Calu3 (cell line): ENCODE measurements at regions of chr5 and their contacts with region 1.

Region 1: GRCh38 chr5:142874537-142874936 is 104.4 kb downstream of the ARHGAP26 start:
- DNase-seq: peak; percentile 92
- H3K4me3 Mint-ChIP-seq: peak overlapping the region; percentile 15
- H3K27ac Mint-ChIP-seq: peak overlapping the region; percentile 98
- H3K4me1 Mint-ChIP-seq: peaks cover 94% of the 10 kb centered on the region
- H3K27me3 Mint-ChIP-seq: no peaks in the 10 kb centered on the region
- CTCF ChIP-seq: no peak

Region 2: DNA sequence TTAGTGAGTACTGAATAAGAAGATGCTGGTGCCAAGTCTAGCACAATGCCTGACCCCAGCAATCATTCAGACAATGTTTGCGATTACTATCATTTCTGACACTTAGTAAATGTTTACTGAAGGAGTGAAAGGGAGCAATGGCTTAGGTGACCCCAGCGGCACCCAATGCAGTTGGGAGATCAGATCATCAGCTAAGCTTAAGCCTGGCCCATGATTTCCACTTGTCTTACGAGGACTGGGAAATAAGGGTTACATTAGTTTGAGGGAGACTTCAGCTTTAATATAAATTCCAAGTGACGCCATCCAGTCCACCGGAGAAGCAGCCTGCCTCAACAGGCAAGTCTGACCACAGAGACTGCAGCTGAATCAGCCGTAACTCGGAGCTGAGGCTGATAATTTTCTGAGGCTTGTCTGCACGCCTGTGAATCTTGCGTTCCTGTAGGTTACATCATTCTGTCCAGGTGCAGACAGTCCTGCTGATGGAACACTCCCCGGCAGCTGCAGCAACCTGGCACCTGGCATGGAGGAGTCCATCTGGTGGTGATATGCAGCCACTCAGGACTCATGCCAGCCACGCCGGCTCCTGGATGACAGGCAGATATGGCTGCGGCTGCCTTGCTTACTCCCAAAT is 153.8 kb before region 1 on chr5:
- CTCF ChIA-PET with region 1: interaction called, 31 read pairs
- intact Hi-C with region 1: no loop called
- DNase-seq: peak; percentile 34
- H3K4me3 Mint-ChIP-seq: no peak overlapping the region
- H3K27ac Mint-ChIP-seq: no peak overlapping the region
- H3K4me1 Mint-ChIP-seq: peaks cover 39% of the 10 kb centered on the region
- H3K27me3 Mint-ChIP-seq: no peaks in the 10 kb centered on the region
- CTCF ChIP-seq: no peak

Region 3: DNA sequence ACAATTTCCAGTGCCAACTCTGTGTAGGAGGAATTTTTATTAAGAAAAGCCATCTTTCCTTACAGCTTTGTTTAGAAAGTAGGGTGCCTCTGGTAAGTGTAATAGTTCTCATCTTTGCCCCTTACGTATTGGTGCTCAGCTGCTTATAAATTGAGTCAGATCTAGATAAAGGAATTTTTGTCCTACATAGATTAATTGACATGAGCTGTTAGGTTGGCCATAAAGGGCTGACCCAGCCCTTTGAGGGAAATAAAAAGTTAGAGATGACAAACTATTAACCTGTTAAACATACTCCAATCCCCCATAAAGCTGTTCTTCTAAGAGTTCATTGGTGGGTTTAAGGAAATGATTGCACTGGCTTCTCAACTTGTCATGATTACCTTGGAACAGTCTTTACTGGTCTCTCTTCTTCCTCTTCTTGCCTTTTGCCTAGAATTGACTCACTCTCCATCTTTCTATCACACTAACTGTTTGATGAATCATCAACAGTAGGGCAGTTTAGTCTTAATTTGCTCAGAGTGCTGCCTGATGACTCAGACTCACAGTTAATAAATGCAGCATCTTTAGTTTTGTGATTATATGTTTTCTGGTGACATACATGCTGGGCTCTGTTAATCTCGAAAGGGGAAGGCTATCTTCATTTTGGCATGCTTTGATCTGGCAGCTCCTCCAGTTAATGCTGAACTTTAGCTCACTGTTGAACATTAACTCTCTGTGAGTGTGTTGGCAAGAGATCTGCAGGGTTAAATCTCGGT is 52.6 kb before region 1 on chr5:
- CTCF ChIA-PET with region 1: interaction called, 14 read pairs
- intact Hi-C with region 1: loop called (anchors 2 kb)
- DNase-seq: peak; percentile 34
- H3K4me3 Mint-ChIP-seq: no peak overlapping the region
- H3K27ac Mint-ChIP-seq: peak overlapping the region; percentile 41
- H3K4me1 Mint-ChIP-seq: peaks cover 88% of the 10 kb centered on the region
- H3K27me3 Mint-ChIP-seq: no peaks in the 10 kb centered on the region
- CTCF ChIP-seq: no peak

Region 4: GRCh38 chr5:142845402-142845921 is 29.1 kb before region 1 on chr5:
- CTCF ChIA-PET with region 1: interaction called, 11 read pairs
- intact Hi-C with region 1: no loop called
- DNase-seq: no peak
- H3K4me3 Mint-ChIP-seq: peak overlapping the region; percentile 44
- H3K27ac Mint-ChIP-seq: peak overlapping the region; percentile 79
- H3K4me1 Mint-ChIP-seq: peaks cover 78% of the 10 kb centered on the region
- H3K27me3 Mint-ChIP-seq: no peaks in the 10 kb centered on the region
- CTCF ChIP-seq: no peak

Region 5: DNA sequence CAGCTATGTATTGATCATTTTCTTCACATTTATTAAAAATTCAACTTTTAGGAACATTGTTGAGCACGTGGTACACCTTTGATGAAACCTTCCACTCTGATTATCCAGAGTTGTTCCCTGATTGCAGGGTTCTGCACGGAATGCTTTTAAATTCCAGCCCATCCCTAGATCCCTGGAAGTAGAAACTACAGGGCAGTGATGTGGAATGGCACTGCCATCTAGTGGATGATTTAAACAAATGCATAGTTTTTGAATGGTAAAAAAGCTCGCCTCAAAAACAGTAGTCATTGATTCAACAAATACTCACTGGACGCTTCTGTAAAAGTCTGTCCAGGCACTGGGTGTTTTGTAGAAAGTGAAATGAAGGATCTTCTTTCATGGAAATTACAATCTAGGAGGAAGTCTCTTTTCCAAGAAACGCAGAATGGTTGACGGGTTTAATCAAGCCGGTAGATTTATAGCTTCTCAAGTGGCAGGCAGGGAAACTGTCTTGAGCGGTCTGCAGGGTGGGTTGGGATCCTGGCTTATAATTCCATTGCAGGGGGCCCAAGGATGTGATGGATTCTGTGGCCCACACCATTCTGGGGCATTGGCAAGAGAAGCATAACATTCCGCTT is 14.0 kb after region 1 on chr5:
- CTCF ChIA-PET with region 1: interaction called, 10 read pairs
- intact Hi-C with region 1: no loop called
- DNase-seq: peak; percentile 46
- H3K4me3 Mint-ChIP-seq: no peak overlapping the region
- H3K27ac Mint-ChIP-seq: no peak overlapping the region
- H3K4me1 Mint-ChIP-seq: peaks cover 33% of the 10 kb centered on the region
- H3K27me3 Mint-ChIP-seq: no peaks in the 10 kb centered on the region
- CTCF ChIP-seq: peak; percentile 52

Region 6: GRCh38 chr5:143279698-143280097 is 405.2 kb after region 1 on chr5:
- CTCF ChIA-PET with region 1: no interaction called
- intact Hi-C with region 1: no loop called
- DNase-seq: peak; percentile 11
- H3K4me3 Mint-ChIP-seq: no peak overlapping the region
- H3K27ac Mint-ChIP-seq: no peak overlapping the region
- H3K4me1 Mint-ChIP-seq: peaks cover 11% of the 10 kb centered on the region
- H3K27me3 Mint-ChIP-seq: no peaks in the 10 kb centered on the region
- CTCF ChIP-seq: no peak